Dendritic cell treated with granulocyte-macrophage colony-stimulating factor and Interleukin-4, amounts not matched to agents 40 ng/mL and 50 ng/mL, for 4 days (primary cell): ENCODE measurements at regions of chr7 and their contacts with region 1.

Region 1: DNA sequence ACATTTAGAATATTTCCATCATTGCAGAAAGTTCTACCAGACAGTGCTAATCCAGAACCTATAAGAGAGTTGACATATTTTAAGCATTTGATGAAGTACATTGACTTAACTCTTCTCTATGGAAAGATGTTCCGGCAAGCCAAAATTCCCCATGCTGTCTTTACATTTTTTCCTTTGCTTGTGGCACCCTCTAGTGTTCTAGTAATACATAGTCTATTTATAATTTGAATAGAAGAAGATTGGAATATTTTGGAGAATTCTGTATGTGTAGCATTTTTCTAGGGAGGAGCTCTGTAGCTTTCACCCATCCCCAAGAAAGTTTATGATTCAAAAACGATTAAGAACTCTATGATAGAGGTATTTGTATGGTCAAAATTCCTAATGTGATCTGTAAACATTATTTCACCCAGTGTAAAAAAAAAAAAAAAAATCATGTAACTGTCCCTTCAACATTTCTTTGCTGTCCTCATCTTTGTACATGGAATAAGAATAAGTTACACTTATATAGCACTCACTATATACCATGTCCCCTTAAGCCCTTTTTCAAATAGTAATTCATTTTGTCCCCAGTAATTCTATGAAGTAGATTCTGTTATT is 33.2 kb downstream of the NRF1 start:
- H3K4me3 Mint-ChIP-seq: no peak overlapping the region
- H3K27ac Mint-ChIP-seq: no peak overlapping the region
- H3K4me1 Mint-ChIP-seq: peaks cover 5% of the 10 kb centered on the region
- H3K27me3 Mint-ChIP-seq: no peaks in the 10 kb centered on the region

Region 2: GRCh38 chr7:129367700-129368388 is 276.9 kb before region 1 on chr7:
- intact Hi-C with region 1: loop called (anchors 5 kb)
- H3K4me3 Mint-ChIP-seq: peak overlapping the region; percentile 6
- H3K27ac Mint-ChIP-seq: peak overlapping the region; percentile 41
- H3K4me1 Mint-ChIP-seq: peaks cover 18% of the 10 kb centered on the region
- H3K27me3 Mint-ChIP-seq: no peaks in the 10 kb centered on the region

Region 3: DNA sequence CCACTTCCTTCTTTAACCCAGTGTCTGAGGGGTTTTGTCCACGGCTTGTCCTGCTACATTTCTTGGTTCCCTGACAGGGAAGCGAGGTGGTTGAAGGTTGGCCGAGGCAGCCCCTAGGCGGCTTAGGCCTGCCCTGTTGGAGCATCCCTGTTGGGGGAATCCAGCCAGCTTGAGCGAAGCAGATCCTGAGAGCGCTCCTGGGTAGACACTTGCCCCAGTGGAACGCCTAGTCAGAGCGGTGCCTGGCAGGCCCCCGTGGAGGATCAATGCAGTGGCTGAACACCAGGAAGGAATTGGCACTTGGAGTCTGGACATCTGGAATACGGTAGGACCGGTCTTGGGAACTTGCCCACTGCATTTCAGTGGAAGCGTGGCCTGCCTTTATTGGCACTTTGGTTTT is 65.9 kb before region 1 on chr7:
- intact Hi-C with region 1: loop called (anchors 2 kb)
- H3K4me3 Mint-ChIP-seq: no peak overlapping the region
- H3K27ac Mint-ChIP-seq: no peak overlapping the region
- H3K4me1 Mint-ChIP-seq: no peaks in the 10 kb centered on the region
- H3K27me3 Mint-ChIP-seq: peaks cover 4% of the 10 kb centered on the region

Region 4: GRCh38 chr7:129728875-129729467 is 84.2 kb after region 1 on chr7:
- intact Hi-C with region 1: no loop called
- H3K4me3 Mint-ChIP-seq: no peak overlapping the region
- H3K27ac Mint-ChIP-seq: no peak overlapping the region
- H3K4me1 Mint-ChIP-seq: no peaks in the 10 kb centered on the region
- H3K27me3 Mint-ChIP-seq: no peaks in the 10 kb centered on the region